Heart right ventricle (tissue), 16 donors: ENCODE measurements at regions of chr12 and their contacts with region 1.

Region 1: DNA sequence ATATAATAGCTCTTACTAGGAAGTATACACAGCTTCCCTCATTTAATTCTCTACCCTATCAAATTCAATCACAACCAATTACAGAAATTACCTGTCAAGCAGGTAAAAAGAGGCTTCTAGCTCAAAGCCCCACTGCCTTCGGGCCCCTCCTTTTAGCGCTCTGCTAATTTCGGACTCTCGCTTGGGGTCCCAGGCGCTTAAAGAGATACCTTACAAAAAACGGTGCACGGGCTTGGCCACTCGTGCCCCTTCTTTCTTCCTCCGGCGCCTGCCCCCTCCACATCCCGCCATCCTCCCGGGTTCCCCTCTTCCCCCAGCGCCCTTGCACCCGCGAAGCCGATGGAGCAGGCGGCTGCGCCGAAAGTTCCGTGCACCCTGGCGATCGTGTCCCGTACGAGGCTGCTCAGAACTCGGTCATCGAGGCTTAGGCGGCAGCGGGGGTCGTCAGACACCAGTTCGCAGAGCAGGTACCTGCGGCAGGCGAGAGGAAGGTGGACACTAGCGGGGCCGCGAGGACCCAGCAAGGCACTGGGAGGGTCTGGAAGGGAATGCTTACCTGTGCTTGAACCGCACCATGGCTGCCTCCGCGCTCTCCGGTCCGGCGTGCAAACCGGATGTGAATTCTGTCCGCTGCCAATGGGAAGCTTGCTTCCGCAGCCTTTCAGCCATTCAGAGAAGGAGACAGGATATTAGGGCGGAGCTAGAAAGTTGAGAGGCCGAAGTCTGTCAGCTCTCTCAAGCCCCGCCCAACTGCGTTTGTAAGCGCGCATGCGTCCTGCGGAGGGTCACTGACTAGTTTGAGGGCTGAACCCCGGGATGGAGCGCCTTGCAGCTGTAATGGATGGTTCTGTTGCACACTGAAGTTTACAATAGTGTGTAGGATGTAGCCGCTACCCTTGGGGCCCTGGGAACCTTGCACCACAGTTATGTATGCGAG is at the start of gene POP5:
- DNase-seq: peak; percentile 96 to 97
- ATAC-seq: peak; percentile 88 to 97 (median 96)
- H3K4me3 ChIP-seq: peak within 1 kb of the TSS; percentile 65 to 97 (median 80)
- H3K27ac ChIP-seq: peak within 1 kb of the TSS in 9 of 10 donors; percentile 43 to 86 (median 76)
- H3K4me1 ChIP-seq: peaks cover 6 to 40% (median 27%) of the 10 kb centered on the region in 9 donors
- H3K27me3 ChIP-seq: peaks cover 0 to 22% (median 0%) of the 10 kb centered on the region in 7 donors
- CTCF ChIP-seq: peak in 1 of 9 donors; percentile 4
- total RNA-seq, gene POP5: 21.1 to 49.9 (median 36.9) TPM

Region 2: GRCh38 chr12:120437754-120438494 is 143.1 kb before region 1 on chr12 and contains the start of gene COX6A1:
- intact Hi-C with region 1: no loop called
- DNase-seq: peak; percentile 92 to 96
- ATAC-seq: peak; percentile 96 to 99 (median 98)
- H3K4me3 ChIP-seq: peak within 1 kb of the TSS; percentile 42 to 93 (median 83)
- H3K27ac ChIP-seq: peak within 1 kb of the TSS; percentile 62 to 95 (median 88)
- H3K4me1 ChIP-seq: peaks cover 0 to 32% (median 17%) of the 10 kb centered on the region in 9 donors
- H3K27me3 ChIP-seq: peaks cover 0 to 3% (median 0%) of the 10 kb centered on the region in 7 donors
- CTCF ChIP-seq: no peak
- total RNA-seq, gene COX6A1: 101 to 180 (median 151) TPM

Region 3: GRCh38 chr12:120640840-120641833 is 60.1 kb after region 1 on chr12:
- intact Hi-C with region 1: loop called in 5 of 10 experiments (anchors 5 kb)
- DNase-seq: peak; percentile 32 to 55
- ATAC-seq: peak; percentile 83 to 92 (median 90)
- H3K4me3 ChIP-seq: peak overlapping the region in 9 of 10 donors; percentile 37 to 55 (median 44)
- H3K27ac ChIP-seq: no peak overlapping the region
- H3K4me1 ChIP-seq: peaks cover 6 to 13% (median 11%) of the 10 kb centered on the region in 9 donors
- H3K27me3 ChIP-seq: peaks cover 10 to 75% (median 62%) of the 10 kb centered on the region in 7 donors
- CTCF ChIP-seq: no peak

Region 4: DNA sequence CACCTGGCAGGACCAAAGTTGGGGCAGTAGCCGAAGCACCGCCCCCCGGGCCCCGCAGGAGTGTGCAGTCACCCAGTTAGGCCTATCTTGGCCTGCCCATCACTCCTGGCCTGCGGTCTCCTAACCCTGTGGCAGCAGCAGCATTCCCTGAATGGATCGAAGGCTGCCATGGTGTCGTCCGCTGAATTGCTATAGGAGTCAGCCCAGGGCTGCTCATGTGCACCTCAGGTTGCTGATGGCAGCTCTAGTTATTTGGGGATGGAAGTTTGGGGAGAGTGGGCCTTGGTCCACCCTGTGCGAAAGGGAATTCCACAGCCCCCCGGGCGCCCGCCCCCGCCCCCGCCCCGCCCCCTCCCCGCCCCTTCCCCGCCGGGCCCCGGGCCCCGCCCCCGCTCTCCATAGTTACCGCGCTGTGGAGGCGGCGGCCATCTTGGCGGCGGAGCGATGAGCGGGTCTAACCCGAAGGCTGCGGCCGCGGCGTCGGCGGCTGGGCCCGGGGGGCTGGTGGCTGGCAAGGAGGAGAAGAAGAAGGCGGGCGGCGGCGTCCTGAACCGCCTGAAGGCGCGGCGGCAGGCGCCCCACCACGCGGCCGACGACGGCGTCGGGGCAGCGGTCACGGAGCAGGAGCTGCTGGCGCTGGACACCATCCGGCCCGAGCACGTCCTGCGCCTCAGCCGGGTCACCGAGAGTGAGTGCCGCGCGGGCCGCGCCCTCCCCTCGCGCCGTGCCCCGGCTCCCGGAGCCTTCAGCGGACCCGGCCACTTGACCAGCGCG is 129.2 kb after region 1 on chr12 and contains the start of gene UNC119B:
- intact Hi-C with region 1: loop called (anchors 1 to 10 kb)
- DNase-seq: peak; percentile 72 to 79
- ATAC-seq: peak; percentile 85 to 95 (median 92)
- H3K4me3 ChIP-seq: peak within 1 kb of the TSS; percentile 50 to 96 (median 88)
- H3K27ac ChIP-seq: peak within 1 kb of the TSS; percentile 75 to 96 (median 92)
- H3K4me1 ChIP-seq: peaks cover 9 to 43% (median 31%) of the 10 kb centered on the region in 9 donors
- H3K27me3 ChIP-seq: no peaks in the 10 kb centered on the region
- CTCF ChIP-seq: no peak
- total RNA-seq, gene UNC119B: 5.9 to 15.4 (median 9.6) TPM

Region 5: DNA sequence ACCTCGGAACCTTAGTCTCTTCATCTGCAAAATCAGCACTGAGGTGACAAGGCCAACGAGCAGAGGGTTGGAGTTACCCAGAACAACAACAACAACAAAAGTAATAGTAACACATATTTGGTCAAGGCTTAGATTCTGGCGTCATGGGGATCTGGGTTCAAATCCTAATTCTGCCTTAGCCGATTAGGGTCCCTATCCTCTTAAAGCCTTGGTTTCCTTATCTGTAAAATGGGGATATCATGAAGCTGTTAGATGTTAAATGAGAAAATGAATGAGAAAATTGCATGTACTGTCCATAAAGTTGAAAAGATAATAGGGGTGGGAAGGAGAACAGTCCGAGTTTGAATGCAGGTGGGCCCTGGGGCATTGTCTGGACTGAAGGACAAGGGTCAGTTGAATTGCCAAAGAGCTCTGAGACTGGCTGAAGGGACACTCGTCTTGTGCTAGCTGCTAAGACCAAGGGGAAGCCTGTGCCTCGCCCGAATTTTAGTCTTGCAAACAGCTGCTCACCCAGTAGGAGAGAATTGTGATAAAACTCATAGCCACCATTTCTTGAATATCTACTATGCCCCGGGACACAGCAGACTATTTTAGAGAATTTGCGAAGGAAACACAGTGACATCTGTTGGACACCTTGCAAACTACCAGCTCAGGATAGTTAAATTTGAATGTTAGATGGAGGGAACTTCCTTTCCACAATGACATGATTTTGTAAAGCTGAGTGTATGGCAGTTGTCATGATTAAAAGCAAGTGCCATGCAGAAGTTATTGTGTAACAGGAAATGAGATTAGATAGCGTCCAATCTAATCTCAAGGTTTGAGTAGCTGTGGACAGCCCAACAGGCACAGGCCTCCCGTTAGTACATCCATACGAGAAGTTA is 390.5 kb after region 1 on chr12:
- intact Hi-C with region 1: loop called in 9 of 10 experiments (anchors 1 to 10 kb)
- DNase-seq: peak in 1 of 2 donors; percentile 34
- ATAC-seq: peak; percentile 57 to 87 (median 80)
- H3K4me3 ChIP-seq: no peak overlapping the region
- H3K27ac ChIP-seq: no peak overlapping the region
- H3K4me1 ChIP-seq: peaks cover 0 to 3% (median 0%) of the 10 kb centered on the region in 9 donors
- H3K27me3 ChIP-seq: no peaks in the 10 kb centered on the region
- CTCF ChIP-seq: peak; percentile 44 to 83 (median 78)

Region 6: DNA sequence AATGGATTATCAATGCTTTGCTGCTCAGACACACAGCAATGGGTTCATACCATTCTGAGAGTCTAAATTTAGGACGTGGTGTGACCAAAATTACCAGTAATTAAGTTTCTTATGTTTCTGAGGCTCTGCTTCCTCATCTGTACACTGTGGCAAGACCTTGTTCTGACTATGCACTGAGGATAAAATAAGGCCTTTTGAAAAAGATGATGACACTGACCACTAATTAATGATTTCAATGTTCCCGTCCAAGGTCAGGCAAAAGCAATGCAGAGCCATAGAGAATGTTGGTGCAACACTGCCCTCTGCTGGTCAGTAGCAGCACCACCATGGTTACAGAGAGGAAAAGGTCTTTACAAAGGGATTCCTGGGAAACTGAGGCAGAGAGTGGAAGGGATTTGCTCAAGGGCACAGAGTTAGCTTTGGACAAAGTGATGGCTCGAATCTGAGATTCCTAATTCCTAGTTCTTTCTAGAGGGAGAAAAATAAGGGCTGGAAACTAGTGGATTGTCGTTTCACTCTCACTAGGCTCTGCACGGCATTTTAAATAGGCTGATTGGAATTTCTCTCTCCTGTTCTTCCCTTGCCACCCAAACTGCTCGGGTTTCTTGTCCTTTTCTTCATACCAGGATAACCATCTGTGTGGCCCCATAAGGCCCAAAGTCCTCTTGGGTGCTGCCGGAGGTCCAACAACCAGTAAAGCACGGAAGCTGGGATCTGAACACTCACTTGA is 529.3 kb after region 1 on chr12:
- intact Hi-C with region 1: loop called in 2 of 10 experiments (anchors 5 kb)
- DNase-seq: peak; percentile 39 to 65
- ATAC-seq: peak; percentile 68 to 86 (median 79)
- H3K4me3 ChIP-seq: no peak overlapping the region
- H3K27ac ChIP-seq: no peak overlapping the region
- H3K4me1 ChIP-seq: peaks cover 0 to 7% (median 0%) of the 10 kb centered on the region in 9 donors
- H3K27me3 ChIP-seq: no peaks in the 10 kb centered on the region
- CTCF ChIP-seq: peak; percentile 86 to 98 (median 94)